PC-3 (cell line): ENCODE measurements at regions of chr10 and their contacts with region 1.

Region 1: DNA sequence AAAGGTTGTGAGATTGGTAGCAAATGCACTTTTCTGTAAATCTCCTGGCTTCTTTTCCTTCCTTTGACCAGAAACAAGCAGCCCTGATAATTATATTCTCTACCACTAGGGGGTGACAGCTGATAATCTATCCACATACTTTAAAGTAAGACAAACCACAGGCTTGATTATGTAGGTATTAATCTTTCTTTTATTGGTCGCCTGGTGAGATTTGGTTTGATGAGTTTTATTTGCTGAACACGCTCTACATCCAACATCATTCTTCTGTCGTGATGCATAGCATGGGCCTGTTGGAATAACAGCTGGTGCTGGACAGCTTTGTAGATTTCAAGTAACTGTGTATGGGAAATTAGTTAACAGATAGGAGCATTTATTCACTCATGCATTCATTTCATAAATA is 63.5 kb downstream of the ZNF365 start:
- DNase-seq: peak; percentile 100
- ATAC-seq: peak; percentile 67
- H3K4me3 ChIP-seq: no peak overlapping the region
- H3K27ac ChIP-seq: no peak overlapping the region
- H3K4me1 ChIP-seq: peaks cover 24% of the 10 kb centered on the region
- H3K27me3 ChIP-seq: no peaks in the 10 kb centered on the region
- CTCF ChIP-seq: peak; percentile 100

Region 2: DNA sequence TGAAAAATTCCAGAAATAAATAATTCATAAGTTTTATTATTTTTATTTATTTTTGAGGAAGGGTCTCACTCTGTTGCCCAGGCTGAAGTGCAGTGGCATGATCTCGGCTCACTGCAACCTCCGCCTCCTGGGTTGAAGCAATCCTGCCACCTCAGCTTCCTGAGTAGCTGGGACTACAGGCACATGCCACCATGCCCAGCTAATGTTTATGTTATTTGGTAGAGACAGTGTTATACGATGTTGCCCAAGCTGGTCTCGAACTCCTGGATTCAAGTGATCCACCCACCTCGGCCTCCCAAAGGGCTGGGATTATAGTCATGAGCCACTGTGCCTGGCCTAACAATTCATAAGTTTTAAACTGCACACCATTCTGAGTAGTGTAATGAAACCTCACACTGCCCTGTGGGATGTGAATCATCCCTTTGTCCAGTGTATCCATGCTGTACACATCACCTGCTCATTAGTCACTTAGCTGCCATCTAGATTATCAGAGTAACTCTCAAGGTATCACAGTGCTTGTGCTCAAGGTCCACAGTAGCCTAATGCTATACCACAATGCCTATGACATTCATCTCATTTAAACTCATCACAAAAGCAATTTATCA is 187.0 kb before region 1 on chr10:
- CTCF ChIA-PET with region 1: no interaction called
- POLR2A ChIA-PET with region 1: interaction called, 4 read pairs
- intact Hi-C with region 1: loop called (anchors 1 kb)
- DNase-seq: peak; percentile 100
- ATAC-seq: peak; percentile 98
- H3K4me3 ChIP-seq: no peak overlapping the region
- H3K27ac ChIP-seq: peak overlapping the region; percentile 44
- H3K4me1 ChIP-seq: peaks cover 47% of the 10 kb centered on the region
- H3K27me3 ChIP-seq: no peaks in the 10 kb centered on the region
- CTCF ChIP-seq: no peak

Region 3: DNA sequence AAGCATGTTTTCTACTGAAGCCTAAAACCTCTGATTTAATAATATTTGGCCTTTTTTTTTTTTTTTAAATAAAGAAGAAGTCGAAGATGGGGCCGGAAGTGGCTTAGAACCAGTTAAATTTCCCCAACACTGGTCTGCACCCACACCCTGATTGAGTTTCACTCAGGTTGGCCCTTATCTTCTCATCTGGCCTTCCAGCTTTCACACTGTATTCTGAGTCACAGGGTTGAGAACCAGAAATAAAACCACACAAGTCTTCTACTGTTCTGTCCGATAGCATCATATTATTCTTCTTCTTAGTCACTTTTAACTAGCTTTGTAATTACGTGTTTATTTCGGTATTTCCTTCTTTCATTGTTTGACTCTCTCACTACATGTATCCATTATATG is 53.6 kb before region 1 on chr10:
- CTCF ChIA-PET with region 1: interaction called, 4 read pairs
- POLR2A ChIA-PET with region 1: no interaction called
- intact Hi-C with region 1: loop called (anchors 1 kb)
- DNase-seq: peak; percentile 100
- ATAC-seq: peak; percentile 74
- H3K4me3 ChIP-seq: peak overlapping the region; percentile 36
- H3K27ac ChIP-seq: peak overlapping the region; percentile 79
- H3K4me1 ChIP-seq: peaks cover 88% of the 10 kb centered on the region
- H3K27me3 ChIP-seq: no peaks in the 10 kb centered on the region
- CTCF ChIP-seq: no peak

Region 4: GRCh38 chr10:62554632-62555199 is 117.0 kb after region 1 on chr10:
- CTCF ChIA-PET with region 1: interaction called, 5 read pairs
- POLR2A ChIA-PET with region 1: no interaction called
- intact Hi-C with region 1: loop called (anchors 1 kb)
- DNase-seq: peak; percentile 94
- ATAC-seq: peak; percentile 94
- H3K4me3 ChIP-seq: no peak overlapping the region
- H3K27ac ChIP-seq: no peak overlapping the region
- H3K4me1 ChIP-seq: no peaks in the 10 kb centered on the region
- H3K27me3 ChIP-seq: no peaks in the 10 kb centered on the region
- CTCF ChIP-seq: peak; percentile 99

Region 5: DNA sequence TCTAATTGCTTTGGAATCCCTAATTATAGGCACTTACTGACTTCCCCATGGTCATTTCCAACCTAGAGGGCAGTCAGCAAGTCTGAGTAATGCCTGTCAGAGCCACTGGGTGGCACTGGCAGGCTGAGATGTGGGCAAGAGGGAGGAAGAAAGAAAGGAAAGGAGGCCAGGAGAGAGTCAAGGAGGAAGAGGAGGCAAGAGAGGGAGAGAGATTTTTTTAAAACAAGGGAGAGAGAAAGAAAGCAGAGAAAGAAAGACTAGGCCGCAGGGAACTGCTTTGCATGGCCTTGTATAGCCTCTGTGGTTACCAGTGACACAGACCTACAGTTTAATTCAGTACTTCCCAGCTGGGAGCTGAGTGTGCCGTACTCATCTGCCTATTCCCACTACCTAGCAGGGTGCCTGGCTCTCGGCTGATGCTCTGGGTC is 156.4 kb after region 1 on chr10:
- CTCF ChIA-PET with region 1: interaction called, 19 read pairs
- POLR2A ChIA-PET with region 1: no interaction called
- intact Hi-C with region 1: loop called (anchors 1 kb)
- DNase-seq: peak; percentile 98
- ATAC-seq: peak; percentile 86
- H3K4me3 ChIP-seq: no peak overlapping the region
- H3K27ac ChIP-seq: no peak overlapping the region
- H3K4me1 ChIP-seq: peaks cover 11% of the 10 kb centered on the region
- H3K27me3 ChIP-seq: no peaks in the 10 kb centered on the region
- CTCF ChIP-seq: peak; percentile 100

Region 6: GRCh38 chr10:62681211-62681940 is 243.7 kb after region 1 on chr10:
- CTCF ChIA-PET with region 1: no interaction called
- POLR2A ChIA-PET with region 1: no interaction called
- intact Hi-C with region 1: no loop called
- DNase-seq: no peak
- ATAC-seq: peak; percentile 63; the same call in 1 of the 2 replicates
- H3K4me3 ChIP-seq: no peak overlapping the region
- H3K27ac ChIP-seq: no peak overlapping the region
- H3K4me1 ChIP-seq: no peaks in the 10 kb centered on the region
- H3K27me3 ChIP-seq: no peaks in the 10 kb centered on the region
- CTCF ChIP-seq: peak; percentile 38

Region 7: DNA sequence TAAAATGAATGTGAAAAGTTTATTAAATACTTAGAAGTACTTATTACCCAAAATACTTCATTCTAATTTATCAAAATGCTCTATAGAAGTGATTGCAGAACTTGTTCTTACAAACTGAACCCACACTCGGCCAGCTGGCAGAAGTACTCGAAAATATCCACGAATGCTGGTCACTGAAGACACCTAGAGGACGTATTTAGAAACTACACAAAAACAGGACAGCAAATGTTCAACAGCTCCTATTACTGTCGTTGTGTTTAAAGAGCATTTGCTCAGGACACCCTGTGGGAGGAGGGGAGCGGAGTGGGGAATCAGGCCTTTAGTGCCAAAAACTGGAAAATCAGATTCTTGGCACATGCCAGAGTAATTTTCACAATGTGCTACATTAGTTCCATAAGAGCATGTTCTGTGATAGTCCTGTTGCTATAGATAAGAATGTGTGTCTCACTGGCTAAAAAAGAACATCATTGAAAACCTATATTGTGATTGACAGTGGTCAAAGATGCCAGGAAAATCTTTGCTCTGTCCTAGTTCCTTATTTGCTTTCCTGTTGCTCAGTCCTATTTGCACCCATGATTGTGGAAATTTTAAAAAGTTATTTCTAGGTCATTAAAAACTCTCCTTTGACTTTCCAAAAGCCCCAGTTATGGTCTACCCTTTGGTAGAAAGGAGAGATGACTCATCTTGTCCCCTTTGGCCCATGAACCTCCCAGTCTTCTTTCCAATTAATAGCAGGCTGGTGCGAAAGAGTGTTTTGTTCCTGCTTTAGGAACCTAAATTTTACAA is 646.4 kb after region 1 on chr10:
- CTCF ChIA-PET with region 1: interaction called, 3 read pairs
- POLR2A ChIA-PET with region 1: no interaction called
- intact Hi-C with region 1: loop called (anchors 1 kb)
- DNase-seq: peak; percentile 99
- ATAC-seq: peak; percentile 95
- H3K4me3 ChIP-seq: no peak overlapping the region
- H3K27ac ChIP-seq: no peak overlapping the region
- H3K4me1 ChIP-seq: peaks cover 14% of the 10 kb centered on the region
- H3K27me3 ChIP-seq: no peaks in the 10 kb centered on the region
- CTCF ChIP-seq: peak; percentile 100

Region 8: GRCh38 chr10:63157845-63158624 is 720.3 kb after region 1 on chr10:
- CTCF ChIA-PET with region 1: no interaction called
- POLR2A ChIA-PET with region 1: no interaction called
- intact Hi-C with region 1: loop called (anchors 1 kb)
- DNase-seq: peak; percentile 99
- ATAC-seq: peak; percentile 80
- H3K4me3 ChIP-seq: no peak overlapping the region
- H3K27ac ChIP-seq: peak overlapping the region; percentile 17
- H3K4me1 ChIP-seq: peaks cover 7% of the 10 kb centered on the region; the same call in 1 of the 2 replicates
- H3K27me3 ChIP-seq: no peaks in the 10 kb centered on the region
- CTCF ChIP-seq: peak; percentile 100